Aorta (tissue), 5 donors: ENCODE measurements at regions of chrX and their contacts with region 1.

Region 1: GRCh38 chrX:130637591-130637990 is 235.8 kb downstream of the RBMX2 start:
- DNase-seq: no peak
- ATAC-seq: no peak
- H3K4me3 ChIP-seq: no peak overlapping the region
- H3K27ac ChIP-seq: no peak overlapping the region
- H3K4me1 ChIP-seq: no peaks in the 10 kb centered on the region
- H3K27me3 ChIP-seq: no peaks in the 10 kb centered on the region

Region 2: DNA sequence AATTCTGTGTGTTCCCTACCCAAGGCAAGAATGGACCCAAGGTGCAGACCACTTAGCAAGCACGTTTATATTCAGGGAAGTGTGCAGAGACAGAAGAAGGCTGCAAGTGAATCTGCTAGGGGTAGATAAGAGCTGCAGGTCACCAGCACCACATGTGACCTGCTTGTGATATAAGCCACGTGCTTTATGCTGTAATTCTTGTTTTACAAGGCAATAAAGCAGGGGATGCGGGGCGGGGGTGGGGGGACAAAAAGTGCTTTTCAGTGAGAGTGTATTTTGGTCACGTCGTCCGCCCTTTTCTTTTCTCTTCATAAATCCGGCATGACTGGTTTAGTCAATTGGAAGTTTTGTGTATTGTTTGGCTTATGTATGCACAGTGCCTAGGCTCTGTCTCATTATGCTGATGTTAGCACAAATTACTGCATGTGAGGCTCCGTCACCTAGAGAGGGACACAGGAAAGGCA is 43.1 kb before region 1 on chrX:
- intact Hi-C with region 1: loop called in 1 of 2 experiments (anchors 2 kb)
- DNase-seq: no peak
- ATAC-seq: no peak
- H3K4me3 ChIP-seq: no peak overlapping the region
- H3K27ac ChIP-seq: no peak overlapping the region
- H3K4me1 ChIP-seq: no peaks in the 10 kb centered on the region
- H3K27me3 ChIP-seq: no peaks in the 10 kb centered on the region

Region 3: GRCh38 chrX:130793966-130794365 is 156.4 kb after region 1 on chrX:
- intact Hi-C with region 1: no loop called
- DNase-seq: no peak
- ATAC-seq: no peak
- H3K4me3 ChIP-seq: no peak overlapping the region
- H3K27ac ChIP-seq: no peak overlapping the region
- H3K4me1 ChIP-seq: no peaks in the 10 kb centered on the region
- H3K27me3 ChIP-seq: no peaks in the 10 kb centered on the region